Adrenal gland (tissue), 19 donors: ENCODE measurements at regions of chr22 and their contacts with region 1.

Region 1: DNA sequence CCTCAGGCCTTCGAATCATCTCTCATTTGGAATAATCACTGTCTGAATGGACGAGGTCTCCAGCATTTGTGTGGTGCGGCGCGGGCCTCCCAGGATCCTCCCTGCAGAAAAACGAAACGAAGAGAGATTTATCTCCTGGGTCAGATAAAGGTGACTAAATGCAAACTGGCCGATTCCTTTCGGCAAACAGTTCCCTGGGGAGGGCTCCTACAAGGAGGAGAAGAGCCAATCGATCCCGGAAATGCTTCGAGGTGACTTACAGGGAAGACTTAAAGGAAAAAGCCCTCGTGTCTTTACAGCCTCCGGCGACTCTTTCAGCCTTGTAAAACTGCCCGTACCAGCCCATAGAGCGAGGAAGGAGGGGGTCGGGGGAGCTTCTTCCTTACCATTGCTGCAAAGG is 126.5 kb downstream of the MIAT start:
- DNase-seq: no peak
- H3K4me3 ChIP-seq: no peak overlapping the region
- H3K27ac ChIP-seq: no peak overlapping the region
- H3K4me1 ChIP-seq: no peaks in the 10 kb centered on the region
- H3K27me3 ChIP-seq: no peaks in the 10 kb centered on the region
- CTCF ChIP-seq: no peak
- POLR2A ChIP-seq: no peak

Region 2: GRCh38 chr22:26845026-26845743 is 61.3 kb after region 1 on chr22:
- intact Hi-C with region 1: loop called in 1 of 2 experiments (anchors 10 kb)
- DNase-seq: peak in 2 of 7 donors; percentile 2 to 41
- H3K4me3 ChIP-seq: no peak overlapping the region
- H3K27ac ChIP-seq: no peak overlapping the region
- H3K4me1 ChIP-seq: no peaks in the 10 kb centered on the region
- H3K27me3 ChIP-seq: no peaks in the 10 kb centered on the region
- CTCF ChIP-seq: no peak
- POLR2A ChIP-seq: no peak

Region 3: DNA sequence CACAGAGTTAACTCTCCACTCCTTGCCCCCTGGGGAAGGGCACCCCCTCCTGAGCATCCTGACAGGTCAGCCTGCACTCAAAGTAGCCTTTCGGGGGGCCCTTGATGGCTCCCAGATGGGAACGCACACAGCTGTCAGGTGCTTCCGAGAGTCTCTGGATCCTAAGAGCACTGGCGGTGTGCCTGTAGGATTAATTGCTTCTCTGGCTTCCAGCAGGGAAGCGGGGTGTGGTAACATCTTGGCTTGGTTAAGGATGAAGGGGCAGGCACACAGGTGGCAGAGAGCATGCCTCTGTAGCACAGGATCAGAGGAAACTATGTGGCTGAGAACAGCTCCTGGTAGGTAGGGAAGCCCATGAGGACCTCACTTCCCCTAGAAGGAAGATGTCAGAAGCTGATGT is 73.3 kb after region 1 on chr22:
- intact Hi-C with region 1: no loop called
- DNase-seq: no peak
- H3K4me3 ChIP-seq: no peak overlapping the region
- H3K27ac ChIP-seq: no peak overlapping the region
- H3K4me1 ChIP-seq: no peaks in the 10 kb centered on the region
- H3K27me3 ChIP-seq: no peaks in the 10 kb centered on the region
- CTCF ChIP-seq: no peak
- POLR2A ChIP-seq: no peak